Activated naive CD4-positive, alpha-beta T cell treated with anti-CD3 and anti-CD28 coated beads, Interleukin-2, amount 10 ng/mL, durations not matched to agents 7 days and 5 days (primary cell): ENCODE measurements at regions of chr6 and their contacts with region 1.

Region 1: DNA sequence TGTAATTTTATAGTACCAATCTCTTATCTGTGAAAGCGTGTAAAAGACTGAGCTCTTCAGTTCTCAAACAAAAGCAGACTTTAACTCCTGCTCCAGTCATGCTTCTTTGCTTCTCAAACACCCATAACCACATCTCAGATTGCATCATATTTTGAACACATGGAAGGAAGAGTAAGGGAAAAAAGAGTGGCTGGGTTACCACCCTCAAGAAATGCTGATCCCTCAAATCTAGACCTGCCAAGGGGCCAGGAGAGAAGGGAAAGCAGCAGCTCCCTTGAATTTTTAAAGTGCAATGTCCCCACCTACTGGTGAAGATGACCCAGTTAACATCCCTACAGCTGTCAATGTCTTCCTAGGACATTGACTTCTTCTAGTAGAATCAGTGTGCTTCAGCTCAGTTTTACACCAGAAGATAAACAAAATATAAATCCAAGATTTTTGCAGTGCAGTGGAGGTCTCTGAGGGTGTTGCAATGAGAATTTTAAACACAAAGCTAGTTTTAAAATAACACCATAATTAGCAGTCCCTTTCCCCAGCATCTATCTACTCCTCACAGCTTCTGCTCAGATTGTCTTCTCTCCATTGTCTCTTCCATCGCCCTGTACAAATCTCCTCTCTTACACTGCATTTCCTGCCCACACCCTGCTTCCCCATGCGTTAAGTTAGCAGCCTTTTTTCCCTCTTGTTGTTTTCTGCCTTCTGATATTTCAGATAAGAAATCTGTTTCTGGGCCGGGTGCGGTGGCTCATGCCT is 22.6 kb upstream of the HLA-DQB2 start:
- DNase-seq: peak; percentile 45
- H3K4me3 Mint-ChIP-seq: no peak overlapping the region
- H3K27ac Mint-ChIP-seq: no peak overlapping the region
- H3K4me1 Mint-ChIP-seq: no peaks in the 10 kb centered on the region
- H3K27me3 Mint-ChIP-seq: peaks cover 45% of the 10 kb centered on the region

Region 2: DNA sequence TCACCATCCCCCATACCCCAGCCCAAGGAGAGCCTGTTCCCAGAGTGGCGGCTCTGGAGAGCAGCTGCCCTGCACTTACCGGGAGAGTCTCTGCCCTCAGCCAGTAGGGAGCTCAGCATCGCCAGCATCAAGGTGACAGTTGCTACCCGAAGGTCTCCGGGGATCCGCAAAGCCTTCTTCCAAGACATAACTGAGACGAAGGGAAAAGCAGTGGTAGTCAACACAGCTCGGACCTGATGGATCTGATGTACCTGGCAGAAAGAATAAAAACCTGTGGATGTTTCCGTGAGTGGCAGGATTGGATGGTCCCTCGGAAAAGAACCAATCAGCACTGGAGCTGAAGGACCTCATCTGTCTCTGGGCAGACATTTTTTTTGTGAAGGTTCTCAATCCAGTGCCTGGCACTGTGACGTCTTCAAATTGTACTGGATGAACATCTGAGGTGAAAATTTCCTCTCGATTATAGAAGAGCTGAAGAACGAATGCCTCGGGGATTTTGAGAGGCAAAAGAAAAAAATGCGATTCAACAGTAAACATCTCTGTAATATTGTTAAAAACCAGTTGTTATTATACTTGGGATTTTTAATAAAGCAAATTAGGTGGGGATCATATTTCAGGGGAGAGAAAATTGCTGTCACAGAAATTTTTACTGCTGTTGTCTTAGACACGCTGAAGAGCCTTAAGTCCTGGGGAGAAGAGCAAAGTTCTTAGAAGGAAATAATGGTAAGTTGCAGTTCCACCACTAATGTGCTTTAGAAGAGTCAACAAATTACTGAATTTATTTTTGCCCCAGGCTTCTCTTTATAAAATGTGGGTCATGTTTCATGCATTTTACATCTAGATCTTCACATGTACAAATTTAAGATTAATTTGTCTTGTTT is 119.3 kb before region 1 on chr6 and contains the start of gene HLA-DQB1:
- CTCF ChIA-PET with region 1: no interaction called
- DNase-seq: peak; percentile 75
- H3K4me3 Mint-ChIP-seq: peak within 1 kb of the TSS; percentile 82
- H3K27ac Mint-ChIP-seq: peak within 1 kb of the TSS; percentile 84
- H3K4me1 Mint-ChIP-seq: peaks cover 57% of the 10 kb centered on the region
- H3K27me3 Mint-ChIP-seq: peaks cover 41% of the 10 kb centered on the region

Region 3: GRCh38 chr6:32700391-32701040 is 85.4 kb before region 1 on chr6:
- CTCF ChIA-PET with region 1: interaction called, 14 read pairs
- DNase-seq: peak; percentile 43
- H3K4me3 Mint-ChIP-seq: no peak overlapping the region
- H3K27ac Mint-ChIP-seq: no peak overlapping the region
- H3K4me1 Mint-ChIP-seq: peaks cover 2% of the 10 kb centered on the region
- H3K27me3 Mint-ChIP-seq: peaks cover 44% of the 10 kb centered on the region